Dorsolateral prefrontal cortex (tissue), 120 donors: ENCODE measurements at regions of chr2 and their contacts with region 1.

Region 1: GRCh38 chr2:227406177-227407031 is 18.7 kb upstream of the SCYGR1 start:
- DNase-seq: peak in 6 of 10 donors; percentile 26 to 67 (median 60)
- H3K4me3 ChIP-seq: peak overlapping the region in 19 of 59 donors; percentile 2 to 40 (median 16)
- H3K27ac ChIP-seq: peak overlapping the region in 58 of 59 donors; percentile 28 to 93 (median 81)
- H3K27me3 ChIP-seq: no peaks in the 10 kb centered on the region
- CTCF ChIP-seq: peak; percentile 30 to 80 (median 71)

Region 2: GRCh38 chr2:227499627-227500617 is 93.5 kb after region 1 on chr2:
- intact Hi-C with region 1: no loop called
- DNase-seq: peak in 1 of 10 donors; percentile 29
- H3K4me3 ChIP-seq: no peak overlapping the region
- H3K27ac ChIP-seq: peak overlapping the region in 18 of 59 donors; percentile 3 to 57 (median 23)
- H3K27me3 ChIP-seq: no peaks in the 10 kb centered on the region
- CTCF ChIP-seq: no peak

Region 3: DNA sequence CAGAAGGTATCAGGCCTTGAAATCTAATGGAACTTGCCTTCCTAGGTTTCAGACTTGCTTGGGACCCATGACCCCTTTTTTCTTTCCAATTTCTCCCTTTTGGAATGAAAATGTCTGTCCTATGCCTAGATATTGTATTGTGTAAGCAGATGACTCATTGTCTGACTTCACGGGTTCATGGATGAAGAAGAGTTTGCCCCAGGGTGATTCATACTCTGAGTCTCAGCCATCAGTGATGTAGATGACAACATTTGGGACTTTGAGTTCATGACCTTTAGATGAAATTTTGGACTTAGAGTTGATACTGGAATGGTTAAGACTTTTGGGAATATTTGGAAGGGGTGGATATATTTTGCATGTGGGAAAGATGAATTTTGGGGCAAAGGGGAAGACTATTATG is 249.1 kb after region 1 on chr2:
- intact Hi-C with region 1: loop called in 1 of 2 experiments (anchors 10 kb)
- DNase-seq: no peak
- H3K4me3 ChIP-seq: no peak overlapping the region
- H3K27ac ChIP-seq: no peak overlapping the region
- H3K27me3 ChIP-seq: no peaks in the 10 kb centered on the region
- CTCF ChIP-seq: no peak

Region 4: GRCh38 chr2:228344531-228344930 is 938.1 kb after region 1 on chr2:
- intact Hi-C with region 1: no loop called
- DNase-seq: no peak
- H3K4me3 ChIP-seq: no peak overlapping the region
- H3K27ac ChIP-seq: no peak overlapping the region
- H3K27me3 ChIP-seq: no peaks in the 10 kb centered on the region
- CTCF ChIP-seq: no peak